Left ventricle myocardium inferior (tissue), 1 donor: ENCODE measurements at regions of chr16 and their contacts with region 1.

Region 1: DNA sequence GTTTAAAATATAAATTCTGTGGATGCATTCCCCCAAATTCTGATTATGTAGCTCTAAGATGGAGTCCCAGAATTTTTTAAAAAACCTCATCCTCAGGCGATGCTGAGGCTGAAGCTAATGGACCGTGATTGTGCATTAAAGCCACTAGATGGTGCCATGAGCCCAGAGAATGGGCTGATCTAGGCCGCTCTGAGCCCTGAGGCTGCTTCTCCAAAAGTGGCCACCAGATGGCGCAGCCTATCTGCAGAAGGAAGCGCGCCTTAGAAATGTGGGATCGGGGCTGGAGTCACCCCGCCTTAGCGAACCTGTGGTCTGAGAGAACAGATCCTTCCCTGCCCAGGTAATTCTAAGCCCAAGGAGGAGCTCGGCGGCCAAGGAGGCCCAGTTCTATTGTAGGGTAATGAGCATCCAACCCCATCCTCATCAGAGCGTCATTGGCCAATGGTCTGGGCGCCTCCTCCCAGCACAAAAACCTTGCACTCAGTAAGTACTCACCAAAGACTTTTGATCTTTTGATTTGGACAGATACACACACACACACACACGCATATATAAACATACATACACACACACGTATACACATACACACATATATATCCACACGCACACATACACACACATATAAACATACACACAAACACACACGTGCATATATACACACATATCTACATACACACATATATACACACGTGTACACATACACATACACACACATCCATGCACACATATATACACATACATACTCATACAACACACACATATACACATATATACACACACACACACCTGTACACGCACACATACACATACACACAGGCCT is 13.7 kb upstream of the MMP2 start:
- DNase-seq: peak; percentile 85
- H3K4me3 ChIP-seq: peak overlapping the region; percentile 14
- H3K27ac ChIP-seq: no peak overlapping the region
- H3K4me1 ChIP-seq: no peaks in the 10 kb centered on the region
- H3K27me3 ChIP-seq: peaks cover 10% of the 10 kb centered on the region
- CTCF ChIP-seq: peak; percentile 100

Region 2: GRCh38 chr16:55543472-55543871 is 78.2 kb after region 1 on chr16:
- intact Hi-C with region 1: loop called (anchors 2 kb)
- DNase-seq: no peak
- H3K4me3 ChIP-seq: no peak overlapping the region
- H3K27ac ChIP-seq: no peak overlapping the region
- H3K4me1 ChIP-seq: peaks cover 8% of the 10 kb centered on the region
- H3K27me3 ChIP-seq: no peaks in the 10 kb centered on the region
- CTCF ChIP-seq: peak; percentile 55